Motor neuron (in vitro differentiated cells): ENCODE measurements at regions of chr12 and their contacts with region 1.

Region 1: GRCh38 chr12:105382771-105383622 is 52.5 kb downstream of the C12orf75 start:
- ATAC-seq: peak; percentile 53 to 87 (median 60)
- H3K4me3 ChIP-seq: peak overlapping the region in 3 of 5 donors; percentile 10 to 15 (median 15)
- H3K27ac ChIP-seq: no peak overlapping the region
- H3K4me1 ChIP-seq: peaks cover 12 to 16% of the 10 kb centered on the region in 2 donors

Region 2: GRCh38 chr12:105204916-105205315 is 178.1 kb before region 1 on chr12:
- in situ Hi-C with region 1: loop called in 2 of 9 experiments (anchors 25 kb)
- ATAC-seq: peak in 2 of 8 experiments; percentile 39 to 44
- H3K4me3 ChIP-seq: no peak overlapping the region
- H3K27ac ChIP-seq: no peak overlapping the region
- H3K4me1 ChIP-seq: peaks cover 0 to 7% of the 10 kb centered on the region in 2 donors